ENCODE measurements at regions of chr15 and their contacts with region 1.

Region 1: GRCh38 chr15:31365655-31366127 is 39.1 kb downstream of the KLF13 start:
- DNase-seq: peak; percentile 89 to 98 (median 93)
- ATAC-seq: peak; percentile 89 to 92 (median 91)
- H3K4me3 ChIP-seq: peak overlapping the region in 11 of 12 donors; percentile 7 to 47 (median 35)
- H3K27ac ChIP-seq: peak overlapping the region; percentile 87 to 96 (median 92)
- H3K4me1 ChIP-seq: peaks cover 31 to 100% (median 92%) of the 10 kb centered on the region in 12 donors
- H3K27me3 ChIP-seq: no peaks in the 10 kb centered on the region
- CTCF ChIP-seq: peak in 11 of 12 donors; percentile 8 to 66 (median 43)
- POLR2A ChIP-seq: peak in 1 of 2 donors; percentile 31

Region 2: GRCh38 chr15:31332020-31332680 is 33.5 kb before region 1 on chr15:
- intact Hi-C with region 1: loop called in 6 of 10 experiments (anchors 2 to 5 kb)
- DNase-seq: no peak
- ATAC-seq: no peak
- H3K4me3 ChIP-seq: no peak overlapping the region
- H3K27ac ChIP-seq: peak overlapping the region in 11 of 12 donors; percentile 15 to 100 (median 50)
- H3K4me1 ChIP-seq: peaks cover 7 to 89% (median 83%) of the 10 kb centered on the region in 12 donors
- H3K27me3 ChIP-seq: no peaks in the 10 kb centered on the region
- CTCF ChIP-seq: no peak
- POLR2A ChIP-seq: no peak

Region 3: DNA sequence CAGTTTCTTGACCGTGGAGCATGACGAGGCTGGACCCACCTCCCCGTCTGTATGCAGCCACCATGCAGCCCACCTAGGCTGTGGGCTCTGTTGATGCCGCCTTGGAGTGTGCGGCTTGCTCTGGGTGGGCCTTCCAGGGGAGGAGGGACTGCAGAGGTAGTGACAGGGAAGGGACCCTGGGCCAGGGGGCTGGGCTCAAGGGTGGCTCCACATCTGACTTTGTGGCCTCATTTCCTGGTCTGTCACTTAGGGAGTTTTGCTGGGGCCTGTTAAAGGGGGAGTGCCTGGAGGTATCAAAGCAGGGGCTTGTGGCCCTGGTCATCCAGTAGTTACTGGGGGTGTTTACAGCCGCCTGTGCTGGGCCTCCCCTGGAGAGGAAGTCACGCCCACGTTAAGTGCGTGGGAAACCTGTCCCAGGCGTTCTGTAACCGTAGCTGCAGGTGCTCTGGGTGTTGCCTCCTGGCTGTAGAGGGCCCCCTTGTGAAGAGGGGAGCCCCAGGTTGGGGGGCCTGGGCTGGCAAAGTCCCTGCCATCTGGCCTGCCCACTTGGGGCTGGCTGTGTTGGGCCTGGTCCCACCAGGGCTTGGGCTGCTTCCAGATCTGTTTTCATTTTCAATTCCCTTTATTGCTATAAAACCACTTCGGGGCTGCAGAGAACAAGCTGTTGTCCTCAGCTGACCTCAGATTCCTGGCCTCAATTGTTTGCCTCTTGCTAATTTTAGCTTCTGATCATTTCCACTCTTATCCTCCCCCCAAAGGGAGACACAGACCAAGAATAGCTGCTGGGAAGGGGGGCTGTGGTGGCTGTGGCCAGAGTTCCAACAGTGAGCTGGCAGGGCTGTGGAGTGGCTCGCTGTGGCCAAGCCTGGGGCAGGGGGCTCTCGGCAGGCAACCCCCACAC is 12.5 kb before region 1 on chr15:
- intact Hi-C with region 1: loop called in 1 of 10 experiments (anchors 1 kb)
- DNase-seq: peak; percentile 75 to 90 (median 88)
- ATAC-seq: peak; percentile 85 to 91 (median 86)
- H3K4me3 ChIP-seq: peak overlapping the region in 10 of 12 donors; percentile 2 to 50 (median 34)
- H3K27ac ChIP-seq: peak overlapping the region; percentile 85 to 99 (median 94)
- H3K4me1 ChIP-seq: peaks cover 47 to 100% (median 100%) of the 10 kb centered on the region in 12 donors
- H3K27me3 ChIP-seq: no peaks in the 10 kb centered on the region
- CTCF ChIP-seq: peak in 1 of 12 donors; percentile 10
- POLR2A ChIP-seq: no peak

Region 4: GRCh38 chr15:31391687-31392671 is 26.3 kb after region 1 on chr15:
- intact Hi-C with region 1: loop called in 2 of 10 experiments (anchors 2 kb)
- DNase-seq: peak; percentile 81 to 93 (median 90)
- ATAC-seq: peak; percentile 48 to 85 (median 80)
- H3K4me3 ChIP-seq: peak overlapping the region; percentile 57 to 88 (median 75)
- H3K27ac ChIP-seq: peak overlapping the region; percentile 92 to 99 (median 96)
- H3K4me1 ChIP-seq: peaks cover 0 to 33% (median 20%) of the 10 kb centered on the region in 12 donors
- H3K27me3 ChIP-seq: no peaks in the 10 kb centered on the region
- CTCF ChIP-seq: peak in 2 of 12 donors; percentile 9 to 13
- POLR2A ChIP-seq: peak; percentile 32 to 91

Region 5: GRCh38 chr15:31402511-31403056 is 36.9 kb after region 1 on chr15:
- intact Hi-C with region 1: loop called in 1 of 10 experiments (anchors 5 kb)
- DNase-seq: peak; percentile 67 to 85 (median 72)
- ATAC-seq: peak; percentile 35 to 84 (median 80)
- H3K4me3 ChIP-seq: peak overlapping the region in 3 of 12 donors; percentile 1 to 10 (median 2)
- H3K27ac ChIP-seq: peak overlapping the region in 11 of 12 donors; percentile 37 to 78 (median 55)
- H3K4me1 ChIP-seq: peaks cover 0 to 32% (median 18%) of the 10 kb centered on the region in 12 donors
- H3K27me3 ChIP-seq: no peaks in the 10 kb centered on the region
- CTCF ChIP-seq: no peak
- POLR2A ChIP-seq: peak in 1 of 2 donors; percentile 37

Region 6: DNA sequence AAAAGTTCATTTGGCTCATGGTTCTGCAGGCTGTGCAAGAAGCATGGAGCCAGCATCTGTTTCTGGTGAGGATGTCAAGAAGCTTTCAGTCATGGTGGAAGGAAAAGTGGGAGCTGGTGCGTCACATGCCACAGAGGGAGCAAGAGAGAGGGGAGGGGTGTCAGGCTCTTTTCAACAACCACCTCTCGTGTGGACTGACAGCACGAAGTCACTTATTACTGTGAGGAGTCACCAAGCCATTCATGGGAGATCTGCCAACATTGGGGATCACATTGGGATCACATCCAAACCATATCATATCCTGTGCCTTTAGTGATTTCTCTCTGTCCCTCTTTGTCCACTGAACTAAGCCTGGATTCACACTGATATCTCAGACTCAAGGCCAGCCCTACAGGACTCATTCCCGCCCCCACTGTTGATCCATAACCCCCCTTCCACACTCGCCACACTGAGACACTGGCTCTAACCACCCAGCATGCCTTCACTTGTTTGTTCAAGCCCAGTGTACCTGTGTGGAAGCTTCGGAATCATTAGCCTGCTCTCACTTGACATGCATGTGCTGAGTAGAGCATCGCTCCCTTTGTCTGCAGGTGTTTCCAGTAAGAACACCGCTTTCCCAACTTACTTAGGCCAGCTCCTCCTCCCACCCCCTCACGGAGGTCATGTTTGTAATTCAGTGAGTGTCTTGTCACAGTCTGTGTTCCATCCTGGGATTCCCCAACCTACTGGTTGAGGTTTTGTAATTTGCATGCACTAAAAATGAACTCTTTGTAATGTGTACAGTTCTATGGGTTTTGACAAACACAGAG is 93.1 kb after region 1 on chr15:
- intact Hi-C with region 1: no loop called
- DNase-seq: peak in 1 of 5 donors; percentile 6
- ATAC-seq: no peak
- H3K4me3 ChIP-seq: no peak overlapping the region
- H3K27ac ChIP-seq: no peak overlapping the region
- H3K4me1 ChIP-seq: peaks cover 0 to 16% (median 4%) of the 10 kb centered on the region in 12 donors
- H3K27me3 ChIP-seq: no peaks in the 10 kb centered on the region
- CTCF ChIP-seq: no peak
- POLR2A ChIP-seq: no peak

Region 7: DNA sequence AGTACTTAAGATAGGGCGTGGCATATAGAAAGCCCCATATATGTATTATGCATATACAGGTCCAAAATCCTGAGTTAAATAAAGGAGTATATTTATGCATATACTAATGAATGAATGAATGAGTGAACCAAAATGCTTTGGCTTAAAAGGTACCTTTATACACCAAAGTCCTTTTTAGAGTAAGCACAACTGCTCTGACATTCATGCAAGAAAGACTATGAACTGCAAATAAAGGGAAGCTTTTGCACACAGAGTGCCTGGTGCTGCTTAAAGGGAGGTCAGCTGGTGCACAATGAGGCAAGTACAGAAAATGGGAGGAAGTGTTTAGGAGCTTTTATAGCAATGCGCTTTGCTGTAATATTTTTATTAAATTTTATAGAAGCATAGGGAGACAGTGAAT is 174.9 kb after region 1 on chr15:
- intact Hi-C with region 1: no loop called
- DNase-seq: no peak
- ATAC-seq: no peak
- H3K4me3 ChIP-seq: no peak overlapping the region
- H3K27ac ChIP-seq: no peak overlapping the region
- H3K4me1 ChIP-seq: no peaks in the 10 kb centered on the region
- H3K27me3 ChIP-seq: peaks cover 0 to 3% (median 0%) of the 10 kb centered on the region in 9 donors
- CTCF ChIP-seq: no peak
- POLR2A ChIP-seq: no peak

Measured in heart left ventricle (tissue), 16 donors.